Activated T-helper 1 cell treated with anti-CD3 and anti-CD28 coated beads, Interleukin-12 subunit alpha, Interleukin-12 subunit beta, Interleukin-2, Interleukin-4 antibody, amounts not matched to agents 30 ng/mL and 10 ng/mL and 1 ng/mL, durations not matched to agents 14 hours and 24 hours and 36 hours (primary cell): ENCODE measurements at regions of chr19 and their contacts with region 1.

Region 1: DNA sequence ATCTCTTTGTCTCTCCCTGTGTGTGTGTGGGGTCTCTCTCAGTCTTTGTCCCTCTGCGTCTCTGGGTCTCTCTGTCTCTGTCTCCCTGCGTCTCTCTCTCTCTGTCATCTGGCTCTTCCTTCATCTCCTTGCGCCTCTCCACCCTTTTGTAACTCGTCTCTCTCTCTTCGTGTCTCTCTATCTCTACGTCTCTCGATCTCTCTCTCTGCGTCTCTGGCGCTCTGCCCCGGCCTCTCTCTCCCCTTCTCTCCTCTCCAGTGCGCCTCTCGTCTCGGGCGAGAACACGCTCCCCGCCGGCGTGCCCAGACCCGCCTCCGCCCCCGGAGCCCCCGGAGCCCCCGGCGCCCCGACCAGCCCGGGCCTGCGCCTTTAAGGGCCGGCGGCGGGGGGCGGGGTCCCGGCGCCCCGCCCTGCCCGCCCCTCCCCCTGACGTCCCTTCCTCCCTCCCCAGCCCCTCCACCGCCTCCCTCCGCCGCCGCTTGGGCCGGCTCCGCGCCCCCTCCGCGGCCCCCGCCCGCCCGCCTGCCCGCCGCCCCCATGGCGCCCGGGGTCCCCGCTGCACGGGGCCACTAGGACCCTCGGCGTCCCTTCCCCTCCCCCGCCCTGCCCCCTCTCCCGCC is at the start of gene MARK4:
- DNase-seq: peak; percentile 40
- H3K4me3 Mint-ChIP-seq: peak within 1 kb of the TSS; percentile 87
- H3K27ac Mint-ChIP-seq: peak within 1 kb of the TSS; percentile 70
- H3K4me1 Mint-ChIP-seq: peaks cover 19% of the 10 kb centered on the region
- H3K27me3 Mint-ChIP-seq: peaks cover 2% of the 10 kb centered on the region
- total RNA-seq, gene MARK4: 27.1 and 27.2 TPM in 2 replicates

Region 2: GRCh38 chr19:45079063-45079910 is 171.7 kb before region 1 on chr19 and contains the start of gene GEMIN7:
- intact Hi-C with region 1: loop called (anchors 5 kb)
- DNase-seq: peak; percentile 76
- H3K4me3 Mint-ChIP-seq: peak within 1 kb of the TSS; percentile 99
- H3K27ac Mint-ChIP-seq: peak within 1 kb of the TSS; percentile 94
- H3K4me1 Mint-ChIP-seq: peaks cover 40% of the 10 kb centered on the region
- H3K27me3 Mint-ChIP-seq: no peaks in the 10 kb centered on the region
- total RNA-seq, gene GEMIN7: 46.8 and 53.6 TPM in 2 replicates

Region 3: DNA sequence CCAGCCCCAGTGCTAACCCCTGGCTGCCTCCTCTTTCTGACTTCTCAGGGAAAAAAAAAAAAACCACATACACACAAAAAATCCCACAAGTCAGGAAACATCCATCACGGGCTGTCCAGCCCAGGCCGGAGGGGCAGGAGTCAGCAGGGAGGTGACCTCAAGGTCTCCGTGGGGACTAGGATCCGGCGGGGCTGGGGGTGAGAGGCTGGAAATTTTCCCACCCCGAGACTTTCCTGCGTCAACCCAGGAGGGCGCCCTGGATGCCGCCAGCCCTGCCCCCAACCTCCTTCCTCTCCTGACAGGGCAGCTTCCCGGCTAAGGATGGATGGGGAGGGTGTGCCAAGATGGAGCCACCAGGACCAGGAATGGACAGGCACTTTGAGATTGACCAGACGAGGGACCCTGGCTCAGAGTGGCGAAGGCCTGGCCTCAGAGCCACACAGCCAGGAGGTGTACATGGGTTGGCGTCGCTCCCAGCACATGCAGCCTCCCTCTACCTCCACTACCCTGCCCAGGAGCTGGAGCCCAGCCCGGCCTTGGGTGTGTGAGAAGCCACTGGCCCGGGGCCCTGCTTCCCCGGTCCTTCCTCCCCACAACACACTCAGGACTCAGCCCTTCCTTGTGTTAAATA is 39.1 kb before region 1 on chr19:
- intact Hi-C with region 1: no loop called
- DNase-seq: no peak
- H3K4me3 Mint-ChIP-seq: no peak overlapping the region
- H3K27ac Mint-ChIP-seq: no peak overlapping the region
- H3K4me1 Mint-ChIP-seq: peaks cover 6% of the 10 kb centered on the region
- H3K27me3 Mint-ChIP-seq: peaks cover 41% of the 10 kb centered on the region

Region 4: DNA sequence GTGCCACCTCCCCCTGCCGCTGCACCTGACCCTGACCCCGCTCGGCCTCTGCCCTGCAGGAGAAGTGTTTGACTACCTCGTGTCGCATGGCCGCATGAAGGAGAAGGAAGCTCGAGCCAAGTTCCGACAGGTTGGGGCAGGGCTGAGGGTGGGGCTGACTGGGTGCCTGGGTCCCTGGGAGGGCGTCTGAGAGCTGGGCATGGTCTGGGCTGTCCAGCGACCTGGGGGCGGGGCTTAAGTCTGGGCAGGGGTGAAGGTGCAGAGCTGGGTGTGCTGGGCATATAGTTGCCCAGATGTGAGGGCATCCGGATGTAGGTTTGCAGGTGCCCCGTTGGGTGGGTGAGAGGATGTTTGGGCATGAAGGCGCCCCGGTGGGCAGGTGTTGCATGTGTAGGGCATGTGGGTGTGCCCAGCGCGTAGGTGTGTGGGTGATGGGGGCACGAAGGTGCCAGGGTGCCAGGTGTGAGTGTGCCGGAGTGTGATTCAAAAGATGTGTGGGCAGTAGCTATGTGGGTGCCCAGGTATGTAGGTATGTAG is 13.9 kb after region 1 on chr19:
- intact Hi-C with region 1: no loop called
- DNase-seq: no peak
- H3K4me3 Mint-ChIP-seq: no peak overlapping the region
- H3K27ac Mint-ChIP-seq: no peak overlapping the region
- H3K4me1 Mint-ChIP-seq: no peaks in the 10 kb centered on the region
- H3K27me3 Mint-ChIP-seq: no peaks in the 10 kb centered on the region

Region 5: GRCh38 chr19:45340232-45340898 is 89.4 kb after region 1 on chr19 and contains the start of gene KLC3:
- intact Hi-C with region 1: loop called (anchors 1 kb)
- DNase-seq: peak; percentile 35
- H3K4me3 Mint-ChIP-seq: peak within 1 kb of the TSS; percentile 54
- H3K27ac Mint-ChIP-seq: no peak within 1 kb of the TSS
- H3K4me1 Mint-ChIP-seq: peaks cover 6% of the 10 kb centered on the region
- H3K27me3 Mint-ChIP-seq: peaks cover 10% of the 10 kb centered on the region
- total RNA-seq, gene KLC3: not detected in 2 replicates

Region 6: GRCh38 chr19:45402298-45403070 is 151.5 kb after region 1 on chr19:
- intact Hi-C with region 1: no loop called
- DNase-seq: no peak
- H3K4me3 Mint-ChIP-seq: no peak overlapping the region
- H3K27ac Mint-ChIP-seq: no peak overlapping the region
- H3K4me1 Mint-ChIP-seq: peaks cover 43% of the 10 kb centered on the region
- H3K27me3 Mint-ChIP-seq: peaks cover 22% of the 10 kb centered on the region

Region 7: GRCh38 chr19:45485305-45486077 is 234.5 kb after region 1 on chr19:
- intact Hi-C with region 1: loop called (anchors 5 kb)
- DNase-seq: peak; percentile 96
- H3K4me3 Mint-ChIP-seq: peak overlapping the region; percentile 87
- H3K27ac Mint-ChIP-seq: peak overlapping the region; percentile 79
- H3K4me1 Mint-ChIP-seq: peaks cover 6% of the 10 kb centered on the region
- H3K27me3 Mint-ChIP-seq: peaks cover 6% of the 10 kb centered on the region

Region 8: DNA sequence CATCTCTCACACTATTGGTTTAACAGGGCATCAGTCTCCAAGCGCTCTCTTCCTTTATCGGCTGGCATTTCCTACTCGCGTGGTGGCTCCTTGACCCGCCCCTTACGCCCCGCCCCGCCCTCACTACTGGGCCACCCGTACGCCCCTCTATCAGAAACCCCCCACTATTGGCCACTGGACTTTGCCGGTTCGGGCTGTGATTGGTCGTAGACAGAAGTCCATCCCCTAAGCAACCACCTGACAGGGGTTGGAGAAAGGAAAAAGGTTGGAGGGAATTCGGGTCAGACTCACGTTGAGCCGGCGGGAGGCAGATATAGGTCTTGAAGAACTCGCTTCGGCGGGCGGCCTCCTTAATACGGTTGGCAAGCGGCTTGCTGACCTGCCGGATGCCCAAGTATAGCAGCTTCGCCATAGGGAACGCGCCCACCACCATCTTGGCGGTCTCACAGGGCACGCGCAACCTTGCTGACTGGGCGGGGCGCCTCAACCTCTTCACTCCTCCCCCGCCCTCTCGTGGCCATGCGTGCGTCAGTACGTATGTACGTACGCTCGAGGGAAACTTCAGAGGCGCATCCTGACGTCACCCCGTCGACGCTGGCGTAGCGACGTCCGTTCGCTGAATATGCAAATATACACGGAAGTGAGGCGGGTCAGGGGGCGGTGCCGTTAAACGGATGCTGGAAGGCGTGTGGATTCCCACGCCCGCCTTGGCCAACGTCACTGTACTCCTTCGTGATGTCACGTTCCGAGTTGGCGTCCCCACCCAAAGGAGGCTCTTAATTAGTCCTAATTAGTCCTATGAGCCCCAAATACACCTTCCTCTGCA is 333.6 kb after region 1 on chr19 and contains the start of gene OPA3:
- intact Hi-C with region 1: no loop called
- DNase-seq: peak; percentile 98
- H3K4me3 Mint-ChIP-seq: peak within 1 kb of the TSS; percentile 95
- H3K27ac Mint-ChIP-seq: peak within 1 kb of the TSS; percentile 96
- H3K4me1 Mint-ChIP-seq: peaks cover 16% of the 10 kb centered on the region
- H3K27me3 Mint-ChIP-seq: no peaks in the 10 kb centered on the region
- total RNA-seq, gene OPA3: 12.1 and 16.2 TPM in 2 replicates